GM13976 (cell line): ENCODE measurements at regions of chr3 and their contacts with region 1.

Region 1: GRCh38 chr3:56443372-56443771 is 24.9 kb downstream of the ERC2 start:
- DNase-seq: no peak
- CTCF ChIP-seq: no peak

Region 2: GRCh38 chr3:56339671-56340070 is 103.7 kb before region 1 on chr3:
- in situ Hi-C with region 1: loop called (anchors 10 kb)
- DNase-seq: no peak
- CTCF ChIP-seq: no peak